ENCODE measurements at regions of chr2 and their contacts with region 1.

Region 1: GRCh38 chr2:189798312-189799029 is 14.2 kb downstream of the PMS1 start:
- DNase-seq: peak; percentile 64
- H3K4me3 ChIP-seq: no peak overlapping the region
- H3K27ac ChIP-seq: no peak overlapping the region
- H3K4me1 ChIP-seq: no peaks in the 10 kb centered on the region
- H3K27me3 ChIP-seq: no peaks in the 10 kb centered on the region
- CTCF ChIP-seq: peak; percentile 24 to 41
- POLR2A ChIP-seq: no peak

Region 2: GRCh38 chr2:189719571-189719970 is 78.9 kb before region 1 on chr2:
- CTCF ChIA-PET with region 1: no interaction called
- POLR2A ChIA-PET with region 1: no interaction called
- dilution Hi-C with region 1: no loop called
- intact Hi-C with region 1: no loop called
- DNase-seq: no peak
- H3K4me3 ChIP-seq: no peak overlapping the region
- H3K27ac ChIP-seq: no peak overlapping the region
- H3K4me1 ChIP-seq: no peaks in the 10 kb centered on the region
- H3K27me3 ChIP-seq: no peaks in the 10 kb centered on the region
- CTCF ChIP-seq: no peak
- POLR2A ChIP-seq: no peak

Region 3: DNA sequence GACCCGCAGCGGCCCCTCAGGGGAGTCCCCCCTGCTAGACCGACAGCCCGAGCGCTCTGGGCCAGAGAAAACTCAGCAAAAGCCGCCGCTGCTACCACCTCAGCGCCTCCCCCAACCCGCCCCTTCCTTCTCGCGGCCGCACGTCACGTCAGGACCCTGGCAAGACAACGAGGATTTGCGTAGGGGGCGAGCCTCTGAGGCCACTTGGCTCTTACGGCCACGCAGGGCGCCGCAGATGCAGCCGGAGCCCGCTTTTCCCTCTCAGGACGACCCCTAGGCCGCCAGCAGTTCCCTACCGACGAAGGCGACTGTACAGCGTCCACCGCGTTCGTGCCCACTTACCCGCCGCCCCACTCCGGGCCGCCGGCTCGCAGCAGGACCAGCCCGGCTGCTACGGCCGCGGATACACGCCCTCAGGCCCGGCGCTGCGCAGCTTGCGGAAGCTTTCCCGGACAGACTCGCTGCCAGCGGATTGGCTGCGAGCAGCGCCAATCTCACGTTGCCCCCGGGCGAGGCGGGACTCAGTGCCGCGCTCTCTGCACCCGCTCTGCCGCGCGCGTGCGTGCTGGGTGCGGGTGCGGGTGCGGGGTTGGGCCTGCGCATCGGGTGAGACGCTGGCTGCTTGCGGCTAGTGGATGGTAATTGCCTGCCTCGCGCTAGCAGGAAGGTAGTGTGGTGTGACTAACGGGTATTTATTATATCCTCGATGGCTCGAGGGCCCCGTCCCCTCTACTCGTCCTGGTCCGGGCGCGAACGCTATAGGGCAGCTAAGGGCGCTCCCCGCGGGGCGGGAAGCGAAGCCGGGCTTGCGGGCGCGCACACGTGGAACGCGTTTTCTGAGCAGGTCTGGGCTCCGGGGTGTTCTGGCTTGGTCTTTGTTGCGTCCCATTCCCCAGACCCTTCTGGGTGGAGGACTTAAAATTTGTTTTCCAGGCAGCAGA is 14.3 kb before region 1 on chr2 and contains the starts of genes ORMDL1 and PMS1:
- CTCF ChIA-PET with region 1: interaction called, 21 read pairs
- POLR2A ChIA-PET with region 1: no interaction called
- dilution Hi-C with region 1: no loop called
- intact Hi-C with region 1: no loop called
- DNase-seq: peak; percentile 98
- H3K4me3 ChIP-seq: peak within 1 kb of the TSS; percentile 73 to 95 (median 87)
- H3K27ac ChIP-seq: peak within 1 kb of the TSS; percentile 71
- H3K4me1 ChIP-seq: peaks cover 16% of the 10 kb centered on the region
- H3K27me3 ChIP-seq: no peaks in the 10 kb centered on the region
- CTCF ChIP-seq: no peak
- POLR2A ChIP-seq: peak; percentile 92
- total RNA-seq, gene ORMDL1: 58.0 and 63.3 TPM in 2 replicates
- total RNA-seq, gene PMS1: 27.8 and 28.4 TPM in 2 replicates

Region 4: DNA sequence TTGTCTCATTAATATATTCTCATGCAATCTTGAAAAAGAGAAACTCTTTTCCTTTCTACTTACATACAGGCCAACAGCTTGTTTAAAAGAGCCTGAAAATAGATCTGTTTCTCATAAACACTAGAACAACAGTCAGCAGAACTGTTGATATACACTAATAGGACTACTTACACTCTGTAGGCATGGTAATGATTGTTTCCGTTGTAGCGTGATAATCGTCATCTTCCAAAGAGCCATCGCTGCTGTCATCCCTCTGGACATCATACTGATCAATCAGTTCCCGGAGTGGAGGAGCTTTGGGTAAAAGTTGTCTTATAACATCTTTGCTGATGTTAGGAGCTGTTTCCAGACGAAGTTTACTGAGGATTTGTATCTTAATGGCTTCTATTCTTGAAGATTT is 263.6 kb after region 1 on chr2:
- CTCF ChIA-PET with region 1: interaction called, 12 read pairs
- POLR2A ChIA-PET with region 1: no interaction called
- dilution Hi-C with region 1: no loop called
- intact Hi-C with region 1: no loop called
- DNase-seq: no peak
- H3K4me3 ChIP-seq: no peak overlapping the region
- H3K27ac ChIP-seq: no peak overlapping the region
- H3K4me1 ChIP-seq: no peaks in the 10 kb centered on the region
- H3K27me3 ChIP-seq: no peaks in the 10 kb centered on the region
- CTCF ChIP-seq: no peak
- POLR2A ChIP-seq: no peak

Region 5: DNA sequence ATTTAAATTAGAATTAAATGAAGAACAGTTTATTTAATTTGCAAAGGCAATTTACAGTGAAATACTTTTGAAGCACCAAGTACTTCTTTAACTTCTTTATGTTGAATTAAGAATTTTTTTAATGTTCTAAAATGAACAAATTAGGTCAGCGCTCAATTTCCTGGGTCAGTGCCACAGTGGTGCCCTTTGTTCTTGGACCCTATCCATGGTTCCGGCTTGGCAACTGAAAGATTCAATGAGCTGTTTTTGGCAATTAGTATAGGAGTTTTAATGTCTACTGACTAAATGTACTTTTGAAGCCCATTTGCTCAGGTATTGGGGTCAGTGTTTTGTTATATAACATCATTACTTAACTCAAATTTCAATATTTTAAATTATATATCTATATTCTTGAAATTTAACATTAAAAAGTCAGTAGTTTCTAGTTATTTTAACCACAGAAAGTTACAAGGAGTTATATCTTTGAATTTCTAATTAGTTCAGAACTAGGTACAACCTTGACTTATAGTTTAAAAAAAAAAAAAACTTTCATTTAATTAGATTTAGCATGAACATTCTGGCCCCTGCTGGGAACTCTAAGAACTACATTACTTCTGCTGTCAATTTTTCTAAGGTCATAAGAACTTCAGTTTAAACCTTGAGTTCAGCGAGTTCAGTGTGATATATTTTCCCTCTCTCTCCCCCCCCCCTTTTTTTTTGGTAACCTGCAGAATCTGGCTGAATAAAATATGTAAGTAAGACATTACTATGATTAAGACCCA is 271.6 kb after region 1 on chr2:
- CTCF ChIA-PET with region 1: interaction called, 51 read pairs
- POLR2A ChIA-PET with region 1: no interaction called
- dilution Hi-C with region 1: no loop called
- intact Hi-C with region 1: loop called (anchors 1 kb)
- DNase-seq: peak; percentile 70
- H3K4me3 ChIP-seq: no peak overlapping the region
- H3K27ac ChIP-seq: no peak overlapping the region
- H3K4me1 ChIP-seq: no peaks in the 10 kb centered on the region
- H3K27me3 ChIP-seq: no peaks in the 10 kb centered on the region
- CTCF ChIP-seq: peak; percentile 17 to 35
- POLR2A ChIP-seq: no peak

Region 6: DNA sequence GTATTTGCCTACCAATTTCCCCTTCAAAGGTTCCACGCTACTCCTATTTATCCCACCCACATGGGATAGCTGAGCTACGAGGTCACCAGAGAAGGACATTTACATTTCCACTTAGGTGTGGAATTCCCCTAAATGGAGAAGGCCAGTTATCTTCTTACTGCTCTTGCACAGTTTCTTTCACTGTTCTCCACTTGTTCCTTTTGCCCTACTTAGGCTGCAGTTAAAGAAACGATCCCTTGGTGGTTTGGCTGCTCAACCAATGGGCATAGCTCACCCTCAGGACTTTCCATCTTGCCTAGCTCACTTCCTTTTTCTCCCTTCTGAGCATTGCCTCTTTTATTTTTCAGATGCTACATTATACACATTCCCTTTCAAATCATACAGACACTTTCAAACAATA is 1868.3 kb after region 1 on chr2:
- CTCF ChIA-PET with region 1: no interaction called
- POLR2A ChIA-PET with region 1: no interaction called
- dilution Hi-C with region 1: no loop called
- intact Hi-C with region 1: no loop called
- DNase-seq: no peak
- H3K4me3 ChIP-seq: no peak overlapping the region
- H3K27ac ChIP-seq: no peak overlapping the region
- H3K4me1 ChIP-seq: peaks cover 12% of the 10 kb centered on the region
- H3K27me3 ChIP-seq: no peaks in the 10 kb centered on the region
- CTCF ChIP-seq: no peak
- POLR2A ChIP-seq: no peak